Activated CD8-positive, alpha-beta memory T cell treated with anti-CD3 and anti-CD28 coated beads, Interleukin-2, amount 10 ng/mL, durations not matched to agents 7 days and 5 days (primary cell): ENCODE measurements at regions of chr5 and their contacts with region 1.

Region 1: GRCh38 chr5:141650851-141651727 is at the start of gene FCHSD1:
- DNase-seq: peak; percentile 92
- ATAC-seq: peak; percentile 98
- H3K4me3 Mint-ChIP-seq: peak within 1 kb of the TSS; percentile 93
- H3K27ac Mint-ChIP-seq: peak within 1 kb of the TSS; percentile 95
- H3K4me1 Mint-ChIP-seq: peaks cover 27% of the 10 kb centered on the region
- H3K27me3 Mint-ChIP-seq: no peaks in the 10 kb centered on the region
- total RNA-seq, gene FCHSD1: 46.5 to 64.1 TPM

Region 2: DNA sequence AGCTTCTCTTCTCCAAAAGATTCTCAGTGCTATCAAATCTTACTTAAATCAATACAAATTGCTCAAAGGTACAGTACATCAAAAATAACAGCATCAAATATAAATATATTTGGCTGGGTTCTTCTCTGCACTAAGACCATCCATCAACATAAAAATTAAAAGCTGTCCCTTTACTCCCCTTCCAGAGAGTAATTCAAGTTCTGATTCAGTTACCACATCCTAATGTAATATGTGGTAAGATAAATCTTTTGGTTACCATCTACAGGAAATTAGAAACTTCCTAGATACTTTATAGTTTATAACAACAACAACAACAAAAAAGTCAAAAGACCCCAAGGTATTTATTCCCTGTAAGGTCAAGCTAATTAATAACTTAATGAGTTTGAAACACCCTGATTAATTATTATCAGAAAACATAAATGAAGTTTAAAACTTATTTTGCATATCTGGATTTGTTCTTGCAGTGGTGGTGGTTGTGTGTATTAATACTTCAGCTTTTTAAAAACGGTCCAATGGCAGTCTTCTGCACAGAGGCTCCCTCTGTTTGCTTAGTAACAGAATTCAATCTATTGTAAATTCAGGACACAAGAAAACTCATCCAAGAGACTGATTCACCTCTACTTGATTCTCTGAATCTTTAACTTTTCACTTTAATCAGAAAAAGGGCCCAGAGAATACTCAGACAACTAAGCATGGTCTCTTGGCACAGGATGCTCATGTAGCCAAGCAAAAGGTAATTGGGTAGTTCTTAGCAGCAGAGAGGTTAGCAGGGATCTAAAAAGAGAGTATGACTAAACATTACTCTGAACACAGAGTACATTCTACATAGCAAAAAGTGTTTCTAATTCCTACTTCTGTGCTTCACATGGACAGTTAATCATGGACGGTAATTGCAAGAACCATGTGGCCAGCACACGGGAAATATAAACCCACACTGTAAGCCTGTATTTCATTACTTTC is 52.4 kb before region 1 on chr5:
- CTCF ChIA-PET with region 1: interaction called, 10 read pairs
- DNase-seq: no peak
- ATAC-seq: peak; percentile 75
- H3K4me3 Mint-ChIP-seq: no peak overlapping the region
- H3K27ac Mint-ChIP-seq: peak overlapping the region; percentile 67
- H3K4me1 Mint-ChIP-seq: peaks cover 70% of the 10 kb centered on the region
- H3K27me3 Mint-ChIP-seq: no peaks in the 10 kb centered on the region

Region 3: DNA sequence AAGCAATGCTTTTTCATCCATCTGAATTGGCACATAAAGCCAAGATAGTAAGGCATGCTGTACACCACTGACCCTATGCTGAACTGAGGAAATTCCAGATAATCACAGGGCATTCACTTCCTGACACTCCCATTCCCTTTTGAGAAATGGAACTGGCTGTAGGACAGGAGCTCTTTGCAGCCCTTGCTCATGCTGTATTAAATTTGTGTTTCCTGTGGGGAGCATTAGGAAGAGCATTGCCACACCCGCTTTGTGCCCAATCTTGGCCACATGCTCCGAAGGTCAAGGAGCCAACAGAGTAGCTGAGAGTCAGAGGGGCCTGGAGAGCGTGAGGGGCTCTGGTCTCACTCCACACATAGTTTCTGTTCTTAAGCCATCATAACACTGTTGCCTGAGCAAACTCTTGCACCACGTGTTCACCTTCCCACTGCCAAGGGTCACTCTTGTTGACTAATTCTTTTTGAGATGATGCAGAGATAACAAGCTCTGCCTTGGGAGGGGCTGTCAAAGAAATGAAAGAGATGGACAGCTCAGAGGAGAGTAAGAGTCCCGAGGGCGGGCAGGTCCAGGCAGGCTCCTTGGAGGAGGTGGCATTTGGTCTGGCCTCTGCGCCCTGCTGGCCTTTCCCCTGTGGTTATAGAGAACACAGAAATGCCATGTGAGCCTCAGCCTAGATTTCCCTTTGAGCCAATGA is 62.7 kb after region 1 on chr5:
- CTCF ChIA-PET with region 1: no interaction called
- DNase-seq: no peak
- ATAC-seq: no peak
- H3K4me3 Mint-ChIP-seq: no peak overlapping the region
- H3K27ac Mint-ChIP-seq: no peak overlapping the region
- H3K4me1 Mint-ChIP-seq: no peaks in the 10 kb centered on the region
- H3K27me3 Mint-ChIP-seq: peaks cover 12% of the 10 kb centered on the region